A673 (cell line): ENCODE measurements at regions of chr13 and their contacts with region 1.

Region 1: DNA sequence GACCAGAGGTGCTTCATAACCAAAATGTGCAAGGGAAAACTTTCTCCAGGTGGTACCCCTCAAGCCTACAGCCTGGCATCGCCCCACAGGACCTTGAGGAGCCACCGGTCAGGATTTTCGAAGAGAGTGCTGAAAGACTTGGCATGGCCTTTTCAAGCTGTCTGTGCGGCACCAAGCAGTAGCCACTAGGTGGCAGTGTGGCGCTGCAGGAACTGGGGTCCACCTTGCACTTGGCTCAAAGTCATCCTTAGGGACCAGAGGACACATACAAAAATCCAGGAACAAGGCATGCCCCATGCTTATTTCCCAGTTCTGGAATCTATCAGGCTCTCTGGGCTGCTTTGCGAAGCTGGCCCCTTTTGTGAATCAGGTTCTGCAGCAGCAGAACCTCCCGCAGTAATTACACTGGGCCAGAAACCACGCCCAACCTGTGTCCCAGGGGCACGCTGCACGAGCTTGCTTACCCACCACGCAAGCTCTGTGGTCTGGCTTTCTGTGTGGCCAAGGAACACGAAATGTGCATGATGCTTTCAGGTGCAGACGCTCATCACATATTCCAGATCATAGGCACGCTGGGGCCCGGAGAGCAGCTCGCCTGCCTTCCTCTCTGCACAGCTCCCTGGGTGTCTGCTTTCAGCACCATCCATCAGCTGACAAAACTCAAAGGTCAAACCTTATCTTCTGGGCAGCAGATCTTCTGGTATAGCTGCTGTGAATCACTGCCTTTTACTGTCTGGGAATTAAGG is 87.2 kb downstream of the SLC7A1 start:
- DNase-seq: peak; percentile 85
- H3K4me3 ChIP-seq: no peak overlapping the region
- H3K27ac ChIP-seq: no peak overlapping the region
- H3K4me1 ChIP-seq: no peaks in the 10 kb centered on the region
- H3K27me3 ChIP-seq: no peaks in the 10 kb centered on the region
- CTCF ChIP-seq: peak; percentile 97

Region 2: DNA sequence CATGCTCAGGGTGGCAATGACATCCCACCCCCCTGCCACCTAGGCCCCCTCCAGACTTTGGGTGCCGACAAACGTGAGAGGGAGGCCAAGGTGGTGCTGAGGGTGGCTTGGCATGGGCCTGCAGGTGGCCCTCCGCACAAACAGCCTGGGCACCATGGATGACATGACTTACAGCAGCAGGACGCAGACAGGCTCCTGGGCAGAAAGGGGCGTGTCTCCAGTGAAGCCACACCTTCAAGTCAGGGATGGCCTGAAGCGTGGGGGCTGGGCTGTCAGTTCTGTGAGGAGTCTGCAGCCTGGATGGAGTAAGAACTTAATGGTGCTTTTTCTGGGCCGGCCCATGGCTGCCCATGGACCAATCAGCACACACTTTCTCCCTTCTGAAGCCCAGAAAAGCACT is 824.0 kb before region 1 on chr13:
- CTCF ChIA-PET with region 1: no interaction called
- POLR2A ChIA-PET with region 1: no interaction called
- intact Hi-C with region 1: no loop called
- DNase-seq: peak; percentile 14
- H3K4me3 ChIP-seq: no peak overlapping the region
- H3K27ac ChIP-seq: no peak overlapping the region
- H3K4me1 ChIP-seq: no peaks in the 10 kb centered on the region
- H3K27me3 ChIP-seq: no peaks in the 10 kb centered on the region
- CTCF ChIP-seq: no peak

Region 3: GRCh38 chr13:29707876-29708543 is 199.7 kb after region 1 on chr13:
- CTCF ChIA-PET with region 1: interaction called, 14 read pairs
- POLR2A ChIA-PET with region 1: no interaction called
- intact Hi-C with region 1: loop called (anchors 2 kb)
- DNase-seq: peak; percentile 56
- H3K4me3 ChIP-seq: no peak overlapping the region
- H3K27ac ChIP-seq: no peak overlapping the region
- H3K4me1 ChIP-seq: peaks cover under 1% of the 10 kb centered on the region
- H3K27me3 ChIP-seq: peaks cover 32% of the 10 kb centered on the region
- CTCF ChIP-seq: peak; percentile 75

Region 4: GRCh38 chr13:29850224-29850898 is 342.1 kb after region 1 on chr13 and contains the start of gene UBL3:
- CTCF ChIA-PET with region 1: no interaction called
- POLR2A ChIA-PET with region 1: no interaction called
- intact Hi-C with region 1: loop called (anchors 10 kb)
- DNase-seq: peak; percentile 98
- H3K4me3 ChIP-seq: peak within 1 kb of the TSS; percentile 74
- H3K27ac ChIP-seq: peak within 1 kb of the TSS; percentile 90
- H3K4me1 ChIP-seq: peaks cover 14% of the 10 kb centered on the region
- H3K27me3 ChIP-seq: no peaks in the 10 kb centered on the region
- CTCF ChIP-seq: no peak
- total RNA-seq, gene UBL3: 12.0 and 13.0 TPM in 2 replicates